GM12878 (cell line): ENCODE measurements at regions of chr9 and their contacts with region 1.

Region 1: DNA sequence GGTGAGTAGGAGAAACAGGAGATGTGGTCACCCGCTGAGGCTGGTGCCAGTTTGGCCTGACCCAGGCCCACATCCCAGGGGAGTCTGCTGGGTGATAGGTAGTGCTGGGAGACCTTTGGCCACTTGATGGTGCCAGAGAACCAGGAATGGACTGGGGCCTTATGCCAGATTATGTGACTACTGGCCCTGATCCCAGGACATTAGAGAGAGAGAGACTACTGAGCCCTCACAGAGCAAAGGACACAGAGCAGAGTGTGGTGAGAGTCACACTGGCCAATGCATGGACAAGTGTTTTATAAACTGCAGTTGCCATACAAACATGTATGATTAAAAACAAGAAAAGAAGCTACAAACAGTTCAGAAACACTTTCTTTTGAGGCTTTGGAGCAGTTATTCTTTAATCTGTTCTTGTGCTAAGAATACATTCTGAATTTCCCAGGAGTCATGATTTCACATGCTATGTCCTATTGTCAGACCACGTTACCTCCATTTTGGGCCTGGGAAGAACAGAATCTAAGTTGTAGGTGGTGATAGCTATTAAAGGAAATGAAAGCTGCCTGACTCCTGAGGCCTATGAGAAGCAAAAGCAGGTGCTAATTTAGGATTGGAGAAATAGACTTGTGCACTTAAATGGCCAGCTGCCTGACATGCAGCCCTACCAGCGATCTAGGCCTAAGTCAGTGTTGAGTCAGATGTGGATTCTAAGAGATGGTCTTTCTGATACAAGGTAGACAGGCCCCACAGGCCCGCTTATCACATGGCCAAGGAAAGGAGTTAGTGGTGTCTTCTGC is 32.6 kb upstream of the TMOD1 start:
- DNase-seq: peak; percentile 59
- ATAC-seq: peak; percentile 99
- H3K4me3 ChIP-seq: no peak overlapping the region; the same call in 1 of the 2 replicates
- H3K27ac ChIP-seq: peak overlapping the region; percentile 74
- H3K4me1 ChIP-seq: peaks cover 18% of the 10 kb centered on the region
- H3K27me3 ChIP-seq: no peaks in the 10 kb centered on the region
- CTCF ChIP-seq: peak; percentile 83 to 94 (median 92)
- EP300 ChIP-seq: no peak
- POLR2A ChIP-seq: no peak
- RAD21 ChIP-seq: peak; percentile 97

Region 2: DNA sequence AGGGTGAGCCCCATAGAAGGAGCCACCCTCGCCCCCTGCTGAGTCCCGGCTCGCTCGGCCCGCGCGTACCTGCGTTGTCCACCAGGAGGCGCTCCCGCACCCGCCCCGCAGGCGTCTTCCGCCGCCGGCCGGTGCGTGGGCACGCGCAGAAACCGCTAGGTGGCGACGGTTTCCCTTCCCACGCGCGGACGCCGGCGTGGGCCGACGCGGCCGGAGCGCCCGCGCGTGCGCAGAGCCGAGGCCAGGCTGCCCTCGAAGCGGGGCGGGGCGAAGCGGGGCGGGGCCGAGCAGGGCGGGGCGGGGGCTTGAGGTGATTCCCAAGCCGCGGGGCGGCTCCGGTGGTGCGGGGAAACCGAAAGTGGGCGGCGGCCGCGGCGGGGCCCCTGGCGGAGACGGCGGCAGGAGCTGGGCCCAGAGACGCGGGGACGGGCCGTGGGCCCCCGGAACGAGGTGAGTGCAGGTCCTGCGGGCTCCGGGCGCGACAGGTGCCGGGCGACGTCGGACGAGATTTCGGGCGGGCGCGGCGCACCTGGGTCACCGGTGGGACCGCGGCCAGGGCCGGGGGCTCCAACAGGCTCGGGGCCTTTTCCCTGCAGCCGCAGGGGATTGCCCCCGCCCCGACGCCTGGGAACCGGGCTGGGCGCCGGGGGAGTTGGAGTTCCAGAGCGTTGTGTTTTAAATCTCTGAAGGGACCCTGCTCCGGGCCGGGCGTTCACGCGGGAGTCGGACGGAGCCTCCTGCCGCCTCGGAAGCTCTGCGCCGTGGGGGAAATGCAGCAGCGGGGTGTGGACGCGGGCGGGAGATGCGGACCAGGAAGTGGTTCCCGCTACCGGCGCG is 56.8 kb before region 1 on chr9 and contains the start of gene TDRD7:
- CTCF ChIA-PET with region 1: interaction called, 36 read pairs
- POLR2A ChIA-PET with region 1: interaction called, 4 read pairs
- RAD21 ChIA-PET with region 1: interaction called, 11 read pairs
- SMC1A ChIA-PET with region 1: interaction called, 31 read pairs
- in situ Hi-C with region 1: loop called (anchors 5 kb)
- intact Hi-C with region 1: no loop called
- DNase-seq: peak; percentile 50
- ATAC-seq: peak; percentile 85
- H3K4me3 ChIP-seq: peak within 1 kb of the TSS; percentile 86
- H3K27ac ChIP-seq: peak within 1 kb of the TSS; percentile 23
- H3K4me1 ChIP-seq: peaks cover 3% of the 10 kb centered on the region; the same call in 1 of the 2 replicates
- H3K27me3 ChIP-seq: no peaks in the 10 kb centered on the region; a peak in 1 of 4 replicates
- CTCF ChIP-seq: peak; percentile 96 to 100 (median 99); a peak in 5 of 6 replicates
- EP300 ChIP-seq: peak; percentile 16 to 49; a peak in 1 of 4 replicates
- POLR2A ChIP-seq: peak; percentile 69
- RAD21 ChIP-seq: peak; percentile 71
- polyA plus RNA-seq, gene TDRD7: 5.7 to 8.3 TPM

Region 3: DNA sequence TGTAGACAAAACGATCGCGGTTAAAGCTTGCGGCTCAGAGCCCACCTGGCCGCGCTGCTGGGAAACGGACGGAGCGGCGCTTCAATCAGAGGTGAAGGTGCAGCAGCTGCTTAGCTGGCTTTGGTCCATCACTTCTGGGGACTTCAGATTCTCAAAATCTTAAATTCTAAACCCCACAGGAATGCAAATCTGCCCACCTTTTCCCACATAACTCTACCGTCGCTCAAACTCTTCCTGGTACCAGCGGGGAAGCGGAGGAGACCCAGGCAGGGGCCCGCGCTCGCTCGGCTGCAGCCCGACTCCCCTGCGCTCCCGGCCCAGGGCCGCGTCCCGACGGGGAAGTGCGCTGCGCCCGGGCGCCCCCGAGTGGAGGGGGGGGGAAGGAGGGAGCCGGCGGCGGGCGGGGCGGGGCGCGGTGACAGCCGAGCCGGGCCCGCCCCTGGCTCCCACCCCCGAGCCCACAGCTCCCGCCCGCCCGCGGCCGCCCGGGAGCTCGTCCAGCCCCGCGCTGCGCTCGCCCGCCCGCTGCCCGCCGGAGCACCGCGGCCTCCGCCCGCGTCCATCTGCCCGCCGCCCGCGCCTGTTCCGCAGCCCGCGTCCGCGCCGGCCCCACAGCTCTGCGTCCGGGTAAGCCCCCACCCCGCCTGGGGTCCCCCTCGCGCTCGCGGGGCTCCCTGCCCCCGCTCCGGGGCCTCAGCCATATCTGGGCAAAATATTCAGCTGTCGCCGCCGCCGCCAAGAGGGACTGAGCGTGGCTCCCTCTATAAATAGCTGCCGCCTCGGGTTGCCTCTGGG is 32.5 kb after region 1 on chr9 and contains the start of gene TMOD1:
- CTCF ChIA-PET with region 1: interaction called, 247 read pairs
- POLR2A ChIA-PET with region 1: interaction called, 35 read pairs
- RAD21 ChIA-PET with region 1: interaction called, 144 read pairs
- SMC1A ChIA-PET with region 1: interaction called, 144 read pairs
- in situ Hi-C with region 1: no loop called
- intact Hi-C with region 1: loop called (anchors 2 kb)
- DNase-seq: no peak
- ATAC-seq: peak; percentile 73
- H3K4me3 ChIP-seq: peak within 1 kb of the TSS; percentile 86
- H3K27ac ChIP-seq: peak within 1 kb of the TSS; percentile 70
- H3K4me1 ChIP-seq: peaks cover 28% of the 10 kb centered on the region
- H3K27me3 ChIP-seq: no peaks in the 10 kb centered on the region
- CTCF ChIP-seq: peak; percentile 17 to 37 (median 27); a peak in 3 of 6 replicates
- EP300 ChIP-seq: no peak
- POLR2A ChIP-seq: peak; percentile 45; the same call in 1 of the 2 replicates
- RAD21 ChIP-seq: peak; percentile 39; the same call in 1 of the 2 replicates
- polyA plus RNA-seq, gene TMOD1: 11.1 to 16.9 TPM

Region 4: GRCh38 chr9:97529363-97530076 is 60.7 kb after region 1 on chr9:
- CTCF ChIA-PET with region 1: interaction called, 21 read pairs
- POLR2A ChIA-PET with region 1: no interaction called
- RAD21 ChIA-PET with region 1: interaction called, 14 read pairs
- SMC1A ChIA-PET with region 1: interaction called, 16 read pairs
- in situ Hi-C with region 1: no loop called
- intact Hi-C with region 1: no loop called
- DNase-seq: peak; percentile 78
- ATAC-seq: peak; percentile 94
- H3K4me3 ChIP-seq: no peak overlapping the region; the same call in 1 of the 2 replicates
- H3K27ac ChIP-seq: peak overlapping the region; percentile 64
- H3K4me1 ChIP-seq: peaks cover 29% of the 10 kb centered on the region
- H3K27me3 ChIP-seq: no peaks in the 10 kb centered on the region
- CTCF ChIP-seq: no peak
- EP300 ChIP-seq: no peak; a peak in 1 of 4 replicates
- POLR2A ChIP-seq: 0 out of 2 replicates have a peak, but pooled peaks have one; percentile 27
- RAD21 ChIP-seq: no peak

Region 5: GRCh38 chr9:97591535-97591934 is 122.7 kb after region 1 on chr9:
- CTCF ChIA-PET with region 1: interaction called, 573 read pairs
- POLR2A ChIA-PET with region 1: interaction called, 3 read pairs
- RAD21 ChIA-PET with region 1: interaction called, 306 read pairs
- SMC1A ChIA-PET with region 1: interaction called, 377 read pairs
- in situ Hi-C with region 1: no loop called
- intact Hi-C with region 1: no loop called
- DNase-seq: no peak
- ATAC-seq: no peak
- H3K4me3 ChIP-seq: no peak overlapping the region
- H3K27ac ChIP-seq: no peak overlapping the region
- H3K4me1 ChIP-seq: no peaks in the 10 kb centered on the region
- H3K27me3 ChIP-seq: no peaks in the 10 kb centered on the region
- CTCF ChIP-seq: 0 out of 6 replicates have a peak, but pooled peaks have one; percentile 5 to 13 (median 5)
- EP300 ChIP-seq: no peak
- POLR2A ChIP-seq: no peak
- RAD21 ChIP-seq: peak; percentile 49

Region 6: GRCh38 chr9:97632985-97633858 is 164.4 kb after region 1 on chr9 and contains the starts of genes NCBP1 and TSTD2:
- CTCF ChIA-PET with region 1: interaction called, 35 read pairs
- POLR2A ChIA-PET with region 1: interaction called, 4 read pairs
- RAD21 ChIA-PET with region 1: interaction called, 9 read pairs
- SMC1A ChIA-PET with region 1: interaction called, 13 read pairs
- in situ Hi-C with region 1: no loop called
- intact Hi-C with region 1: no loop called
- DNase-seq: peak; percentile 92
- ATAC-seq: peak; percentile 90
- H3K4me3 ChIP-seq: peak within 1 kb of the TSS; percentile 96
- H3K27ac ChIP-seq: peak within 1 kb of the TSS; percentile 93
- H3K4me1 ChIP-seq: peaks cover 5% of the 10 kb centered on the region
- H3K27me3 ChIP-seq: no peaks in the 10 kb centered on the region
- CTCF ChIP-seq: no peak
- EP300 ChIP-seq: peak in 1 of 2 experiments; percentile 25; a peak in 1 of 4 replicates
- POLR2A ChIP-seq: peak; percentile 95
- RAD21 ChIP-seq: no peak
- polyA plus RNA-seq, gene NCBP1: 14.7 to 21.5 TPM
- polyA plus RNA-seq, gene TSTD2: 5.0 to 5.3 TPM

Region 7: GRCh38 chr9:98118640-98119601 is 650.1 kb after region 1 on chr9 and contains the start of gene TRIM14:
- CTCF ChIA-PET with region 1: no interaction called
- POLR2A ChIA-PET with region 1: no interaction called
- RAD21 ChIA-PET with region 1: no interaction called
- SMC1A ChIA-PET with region 1: no interaction called
- in situ Hi-C with region 1: no loop called
- intact Hi-C with region 1: no loop called
- DNase-seq: no peak
- ATAC-seq: peak; percentile 78
- H3K4me3 ChIP-seq: peak within 1 kb of the TSS; percentile 77
- H3K27ac ChIP-seq: peak within 1 kb of the TSS; percentile 90
- H3K4me1 ChIP-seq: peaks cover 25% of the 10 kb centered on the region
- H3K27me3 ChIP-seq: no peaks in the 10 kb centered on the region
- CTCF ChIP-seq: peak in 2 of 3 experiments; percentile 28 to 44; a peak in 3 of 6 replicates
- EP300 ChIP-seq: no peak
- POLR2A ChIP-seq: peak; percentile 94
- RAD21 ChIP-seq: peak; percentile 47
- polyA plus RNA-seq, gene TRIM14: 8.6 to 10.2 TPM